HEK293T (cell line): ENCODE measurements at regions of chr1 and their contacts with region 1.

Region 1: GRCh38 chr1:224116131-224116530 is 2.2 kb downstream of the FBXO28 start:
- DNase-seq: peak; percentile 58

Region 2: GRCh38 chr1:224132901-224133300 is 16.8 kb after region 1 on chr1:
- CTCF ChIA-PET with region 1: no interaction called
- POLR2A ChIA-PET with region 1: no interaction called
- DNase-seq: no peak

Region 3: DNA sequence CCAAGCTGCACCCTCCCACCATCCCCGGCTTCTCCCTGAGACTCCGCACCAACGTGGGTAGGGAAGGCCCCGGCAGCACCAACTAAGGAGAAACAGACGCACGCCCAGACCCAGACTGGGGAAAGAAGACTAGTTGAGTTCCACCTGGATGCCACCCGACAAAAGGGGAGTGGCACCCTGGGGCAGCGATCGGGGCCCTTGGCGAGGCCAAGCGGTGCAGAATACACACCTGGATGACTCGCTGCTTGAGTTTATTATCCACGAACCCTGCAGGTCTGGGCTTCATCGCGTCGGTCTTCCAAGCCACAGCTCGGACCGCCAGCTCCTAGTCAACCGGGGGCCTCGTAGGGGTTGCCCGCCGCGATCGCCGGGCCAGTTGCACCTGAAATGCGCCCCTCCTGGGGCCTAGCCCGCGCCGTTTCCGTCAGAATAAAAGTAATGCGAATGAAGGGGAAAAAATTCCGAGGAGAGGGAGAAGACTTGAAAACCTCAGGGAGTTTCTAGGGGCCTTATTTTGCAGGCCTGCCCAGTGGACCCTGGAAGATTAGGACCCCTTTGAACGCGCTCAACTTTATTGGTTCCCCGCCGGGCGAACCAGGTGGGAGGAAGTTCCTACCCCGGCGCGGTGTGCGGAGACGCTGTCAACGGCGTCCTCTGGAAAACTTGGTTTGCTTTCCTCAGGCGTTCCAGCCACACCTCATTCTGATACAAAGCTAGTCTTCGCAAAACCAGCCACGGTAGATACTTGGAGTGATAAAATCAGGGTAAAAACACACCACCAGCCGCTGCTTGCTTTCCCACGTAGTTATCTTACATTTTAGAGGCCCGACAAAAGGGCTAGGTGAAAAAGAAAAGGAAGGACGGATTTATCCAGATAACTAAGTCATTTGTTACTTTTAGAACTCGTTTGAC is 214.0 kb after region 1 on chr1 and contains the start of gene NVL:
- CTCF ChIA-PET with region 1: interaction called, 5 read pairs
- POLR2A ChIA-PET with region 1: interaction called, 10 read pairs
- DNase-seq: peak; percentile 93